Stomach (tissue), 19 donors: ENCODE measurements at regions of chr7 and their contacts with region 1.

Region 1: GRCh38 chr7:129468087-129468486 is 33.9 kb downstream of the STRIP2 start:
- DNase-seq: peak in 1 of 2 donors; percentile 9
- H3K4me3 ChIP-seq: no peak overlapping the region
- H3K27ac ChIP-seq: no peak overlapping the region
- H3K4me1 ChIP-seq: peaks cover 0 to 11% (median 9%) of the 10 kb centered on the region in 4 donors
- H3K27me3 ChIP-seq: no peaks in the 10 kb centered on the region
- CTCF ChIP-seq: no peak
- EP300 ChIP-seq: no peak
- POLR2A ChIP-seq: no peak

Region 2: DNA sequence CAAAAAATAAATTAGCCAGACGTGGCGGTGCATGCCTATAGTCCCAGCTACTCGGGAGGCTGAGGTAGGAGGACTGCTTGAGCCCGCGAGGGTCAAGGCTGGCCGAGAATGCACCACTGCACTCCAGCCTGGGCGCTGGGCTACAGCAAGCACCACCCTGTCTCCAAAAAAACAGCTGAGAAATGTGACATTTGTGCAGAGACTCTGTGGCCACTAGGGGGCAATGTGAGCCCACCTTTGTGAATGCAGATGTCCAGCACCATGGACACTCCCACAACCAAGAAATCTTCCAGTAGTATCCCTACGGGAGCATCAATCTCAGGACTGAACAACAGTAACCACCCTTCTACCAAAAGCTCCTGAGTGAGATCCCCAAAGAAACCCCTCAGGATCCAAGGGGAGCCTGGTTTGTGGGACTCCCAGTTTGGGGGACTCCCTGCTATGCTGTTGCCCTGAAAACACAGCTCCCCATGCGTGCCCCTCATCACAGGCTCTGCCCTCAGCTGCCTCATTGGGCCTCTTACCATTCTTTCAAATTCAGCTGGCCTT is 249.5 kb before region 1 on chr7:
- intact Hi-C with region 1: loop called (anchors 10 kb)
- DNase-seq: peak; percentile 89 to 94
- H3K4me3 ChIP-seq: no peak overlapping the region
- H3K27ac ChIP-seq: no peak overlapping the region
- H3K4me1 ChIP-seq: peaks cover 0 to 9% (median 6%) of the 10 kb centered on the region in 4 donors
- H3K27me3 ChIP-seq: peaks cover 0 to 11% (median 0%) of the 10 kb centered on the region in 3 donors
- CTCF ChIP-seq: peak in 5 of 7 experiments; percentile 82 to 91 (median 87)
- EP300 ChIP-seq: no peak
- POLR2A ChIP-seq: no peak

Region 3: DNA sequence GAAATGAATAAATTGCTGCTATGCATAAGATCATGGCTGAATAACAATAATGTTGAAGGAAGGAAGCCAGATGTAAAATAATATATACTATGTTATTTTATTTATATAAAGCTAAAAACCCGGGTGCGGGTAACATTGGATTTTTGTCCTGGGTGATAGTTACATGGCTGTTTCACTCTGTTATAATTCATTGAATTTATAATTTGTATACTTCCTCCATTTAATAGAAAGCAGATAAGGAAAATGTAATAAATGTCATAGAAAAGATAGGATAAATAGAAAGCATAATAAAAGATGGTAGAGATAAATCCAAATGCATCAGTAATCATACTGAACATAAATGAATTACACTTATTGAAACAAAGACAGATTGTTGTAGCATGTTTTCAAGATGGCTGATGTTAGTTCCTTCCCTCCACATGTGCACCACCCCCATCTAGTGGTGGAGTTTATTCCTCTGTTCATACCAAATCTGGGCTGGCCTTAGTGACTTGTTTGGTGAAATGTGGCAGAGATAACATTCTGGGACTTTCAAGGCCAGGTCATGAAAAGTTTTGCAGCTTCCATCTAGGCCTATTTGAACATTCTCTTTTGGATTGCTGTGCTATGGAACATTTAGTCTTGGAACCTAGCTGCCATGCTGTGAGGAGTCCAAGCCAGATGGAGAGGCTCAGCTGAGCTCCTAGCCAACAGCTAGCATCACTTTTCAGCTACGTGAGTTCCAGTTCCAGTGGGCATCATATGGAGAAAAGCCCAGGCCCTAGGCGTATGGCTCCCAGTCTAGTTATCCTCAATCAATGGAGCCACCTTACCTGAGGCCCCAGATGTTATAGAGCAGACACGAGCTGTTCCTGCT is 196.4 kb before region 1 on chr7:
- intact Hi-C with region 1: no loop called
- DNase-seq: peak; percentile 39 to 75
- H3K4me3 ChIP-seq: no peak overlapping the region
- H3K27ac ChIP-seq: no peak overlapping the region
- H3K4me1 ChIP-seq: no peaks in the 10 kb centered on the region
- H3K27me3 ChIP-seq: no peaks in the 10 kb centered on the region
- CTCF ChIP-seq: peak in 5 of 7 experiments; percentile 22 to 66 (median 63)
- EP300 ChIP-seq: no peak
- POLR2A ChIP-seq: no peak

Region 4: GRCh38 chr7:129356176-129356575 is 111.9 kb before region 1 on chr7:
- intact Hi-C with region 1: loop called (anchors 5 kb)
- DNase-seq: no peak
- H3K4me3 ChIP-seq: no peak overlapping the region
- H3K27ac ChIP-seq: no peak overlapping the region
- H3K4me1 ChIP-seq: peaks cover 0 to 24% (median 9%) of the 10 kb centered on the region in 4 donors
- H3K27me3 ChIP-seq: no peaks in the 10 kb centered on the region
- CTCF ChIP-seq: no peak
- EP300 ChIP-seq: no peak
- POLR2A ChIP-seq: no peak